Activated T-helper 1 cell treated with anti-CD3 and anti-CD28 coated beads, Interleukin-12 subunit alpha, Interleukin-12 subunit beta, Interleukin-2, Interleukin-4 antibody, amounts not matched to agents 30 ng/mL and 10 ng/mL and 1 ng/mL, durations not matched to agents 14 hours and 24 hours and 36 hours (primary cell): ENCODE measurements at regions of chr7 and their contacts with region 1.

Region 1: DNA sequence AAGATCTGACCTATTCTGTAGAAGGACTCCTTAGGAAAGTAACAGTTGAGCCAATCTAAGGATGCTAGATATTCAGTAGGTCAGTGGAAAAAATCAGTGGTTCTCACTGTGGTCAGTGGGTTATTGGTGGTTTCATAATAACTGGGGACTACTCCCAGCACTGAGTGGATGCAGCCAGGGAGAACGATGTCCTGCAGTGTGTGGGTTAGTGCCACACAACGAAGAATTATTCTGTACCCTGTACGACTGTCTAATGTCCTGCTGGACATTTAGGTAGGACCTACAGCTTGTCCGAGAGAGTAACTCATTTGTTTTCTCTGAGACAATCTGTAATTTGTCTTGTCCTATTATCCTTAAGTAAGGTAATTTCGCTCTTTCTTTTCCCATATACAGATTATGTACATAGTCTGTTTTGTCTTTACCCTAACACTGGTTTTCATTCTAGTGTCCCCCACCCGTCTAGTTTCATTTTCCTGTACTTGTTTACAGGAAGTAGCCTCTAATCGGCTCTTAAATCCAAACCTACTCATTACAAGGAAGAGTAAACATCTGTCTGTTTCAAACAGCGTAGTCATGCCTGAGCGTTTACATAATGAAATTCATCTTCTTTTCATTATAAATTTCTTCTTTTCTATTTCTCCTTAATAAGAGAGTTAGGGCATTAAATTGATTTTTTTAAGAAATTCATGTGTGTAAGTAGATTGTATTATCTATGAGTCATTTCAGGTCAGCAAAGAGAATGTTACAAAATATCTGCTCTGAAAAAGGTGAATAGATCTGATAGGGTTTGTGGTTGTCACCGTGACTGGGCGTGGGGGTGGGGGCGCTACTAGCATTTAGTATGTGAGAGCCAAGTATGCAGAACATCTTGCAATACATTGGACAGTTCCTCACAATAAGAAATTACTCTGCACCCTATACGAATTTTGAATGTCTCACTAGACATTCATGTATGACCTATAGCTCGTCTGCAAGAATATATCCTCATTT is 8.3 kb upstream of the ZC3HAV1L start:
- DNase-seq: peak; percentile 64
- H3K4me3 Mint-ChIP-seq: peak overlapping the region; percentile 66
- H3K27ac Mint-ChIP-seq: peak overlapping the region; percentile 95
- H3K4me1 Mint-ChIP-seq: peaks cover 72% of the 10 kb centered on the region
- H3K27me3 Mint-ChIP-seq: no peaks in the 10 kb centered on the region

Region 2: GRCh38 chr7:138898255-138898654 is 145.9 kb before region 1 on chr7:
- intact Hi-C with region 1: loop called (anchors 5 kb)
- DNase-seq: no peak
- H3K4me3 Mint-ChIP-seq: peak overlapping the region; percentile 31
- H3K27ac Mint-ChIP-seq: peak overlapping the region; percentile 70
- H3K4me1 Mint-ChIP-seq: peaks cover 38% of the 10 kb centered on the region
- H3K27me3 Mint-ChIP-seq: peaks cover 27% of the 10 kb centered on the region

Region 3: GRCh38 chr7:139060695-139061237 is 16.6 kb after region 1 on chr7:
- intact Hi-C with region 1: loop called (anchors 1 kb)
- DNase-seq: no peak
- H3K4me3 Mint-ChIP-seq: no peak overlapping the region
- H3K27ac Mint-ChIP-seq: peak overlapping the region; percentile 74
- H3K4me1 Mint-ChIP-seq: peaks cover 65% of the 10 kb centered on the region
- H3K27me3 Mint-ChIP-seq: no peaks in the 10 kb centered on the region

Region 4: GRCh38 chr7:139075031-139075652 is 31.0 kb after region 1 on chr7:
- intact Hi-C with region 1: loop called (anchors 1 kb)
- DNase-seq: peak; percentile 62
- H3K4me3 Mint-ChIP-seq: peak overlapping the region; percentile 15
- H3K27ac Mint-ChIP-seq: peak overlapping the region; percentile 77
- H3K4me1 Mint-ChIP-seq: peaks cover 61% of the 10 kb centered on the region
- H3K27me3 Mint-ChIP-seq: no peaks in the 10 kb centered on the region

Region 5: DNA sequence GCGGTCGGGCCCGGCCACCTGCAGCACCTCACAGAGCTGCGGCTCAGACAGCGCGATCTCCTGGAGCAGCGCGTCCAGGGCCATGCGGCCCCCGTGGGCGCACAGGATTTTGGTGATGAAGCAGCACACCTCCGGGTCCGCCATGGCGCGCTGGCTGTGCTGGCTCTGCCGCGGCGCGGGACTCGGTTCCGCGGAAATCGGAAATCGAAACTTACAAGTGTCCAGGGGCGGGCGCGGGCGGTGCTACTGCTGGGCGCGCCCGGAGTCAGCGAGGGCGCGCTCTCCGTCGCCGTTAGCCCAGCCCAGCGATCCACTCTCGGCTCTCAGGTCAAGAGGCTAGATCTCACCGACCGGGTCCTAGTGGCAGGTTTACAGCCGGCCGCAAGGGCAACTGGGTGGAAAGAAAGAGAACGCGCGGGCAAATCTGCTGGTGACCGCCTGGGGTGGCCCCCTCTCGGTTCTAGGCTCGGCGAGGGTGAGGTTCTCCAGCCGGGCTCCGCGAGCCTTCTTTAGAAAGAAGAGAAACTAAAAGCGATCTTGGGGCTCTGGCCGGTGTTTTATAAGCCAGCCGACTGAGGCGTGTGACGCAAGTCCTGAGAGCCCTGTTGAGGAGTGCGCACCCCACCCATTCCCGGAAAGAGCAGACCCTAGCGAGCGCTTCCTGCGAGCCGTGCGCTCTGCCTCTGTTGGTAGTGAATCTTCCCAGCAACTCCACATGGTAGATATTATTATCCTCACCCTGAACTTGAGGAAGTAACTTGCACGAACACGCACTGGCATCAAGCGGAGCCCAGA is 65.3 kb after region 1 on chr7 and contains the start of gene ZC3HAV1:
- intact Hi-C with region 1: loop called (anchors 2 kb)
- DNase-seq: peak; percentile 87
- H3K4me3 Mint-ChIP-seq: peak within 1 kb of the TSS; percentile 97
- H3K27ac Mint-ChIP-seq: peak within 1 kb of the TSS; percentile 98
- H3K4me1 Mint-ChIP-seq: peaks cover 38% of the 10 kb centered on the region
- H3K27me3 Mint-ChIP-seq: no peaks in the 10 kb centered on the region
- total RNA-seq, gene ZC3HAV1: 89.7 and 90.0 TPM in 2 replicates

Region 6: GRCh38 chr7:139183878-139184338 is 139.8 kb after region 1 on chr7:
- intact Hi-C with region 1: no loop called
- DNase-seq: no peak
- H3K4me3 Mint-ChIP-seq: no peak overlapping the region
- H3K27ac Mint-ChIP-seq: no peak overlapping the region
- H3K4me1 Mint-ChIP-seq: no peaks in the 10 kb centered on the region
- H3K27me3 Mint-ChIP-seq: peaks cover 2% of the 10 kb centered on the region

Region 7: DNA sequence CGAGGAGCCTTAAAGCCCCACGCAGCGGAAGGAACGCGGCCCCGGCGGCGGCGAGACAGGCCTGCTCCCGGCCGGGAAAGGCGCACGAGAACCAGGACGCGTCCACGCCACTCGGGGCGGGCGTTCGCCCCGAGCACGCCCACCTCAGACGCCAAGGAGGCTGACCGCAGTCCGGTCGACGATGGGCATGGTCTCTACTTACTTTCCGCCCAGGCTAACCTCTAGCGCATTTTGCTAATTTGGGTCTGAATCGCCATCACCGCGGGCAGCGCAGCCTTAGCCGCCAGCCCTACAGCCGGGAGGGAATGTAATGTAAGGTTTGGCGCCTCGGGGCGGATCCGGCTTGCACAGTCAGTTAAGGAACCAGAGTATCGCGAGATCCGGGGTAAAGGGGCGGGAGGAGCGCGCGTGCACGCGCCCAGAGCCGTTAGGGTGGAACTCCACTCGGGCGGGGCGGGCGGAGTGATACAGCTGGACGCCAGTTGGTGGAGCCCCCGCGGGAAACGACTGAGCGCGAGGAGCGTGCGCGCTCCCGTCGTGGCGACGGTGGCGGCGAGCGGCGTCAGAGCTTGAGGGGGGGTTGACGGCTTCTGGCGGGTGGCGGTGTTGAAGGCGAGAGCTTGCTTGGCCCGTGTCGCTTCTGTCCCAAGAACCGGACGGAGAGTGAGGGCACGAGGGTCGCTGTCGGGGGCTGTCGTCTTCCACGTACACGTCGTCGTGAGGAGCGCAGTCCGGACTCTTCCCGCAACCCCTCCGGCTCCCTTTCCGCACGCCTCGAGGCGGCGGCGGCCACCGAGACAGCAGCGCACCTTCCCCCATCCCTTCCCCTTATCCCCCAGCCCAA is 315.5 kb after region 1 on chr7 and contains the start of gene LUC7L2:
- intact Hi-C with region 1: loop called (anchors 2 kb)
- DNase-seq: peak; percentile 99
- H3K4me3 Mint-ChIP-seq: peak within 1 kb of the TSS; percentile 88
- H3K27ac Mint-ChIP-seq: peak within 1 kb of the TSS; percentile 97
- H3K4me1 Mint-ChIP-seq: peaks cover 29% of the 10 kb centered on the region
- H3K27me3 Mint-ChIP-seq: no peaks in the 10 kb centered on the region
- total RNA-seq, gene LUC7L2: 179 and 194 TPM in 2 replicates